ENCODE measurements at regions of chr15 and their contacts with region 1.

Region 1: DNA sequence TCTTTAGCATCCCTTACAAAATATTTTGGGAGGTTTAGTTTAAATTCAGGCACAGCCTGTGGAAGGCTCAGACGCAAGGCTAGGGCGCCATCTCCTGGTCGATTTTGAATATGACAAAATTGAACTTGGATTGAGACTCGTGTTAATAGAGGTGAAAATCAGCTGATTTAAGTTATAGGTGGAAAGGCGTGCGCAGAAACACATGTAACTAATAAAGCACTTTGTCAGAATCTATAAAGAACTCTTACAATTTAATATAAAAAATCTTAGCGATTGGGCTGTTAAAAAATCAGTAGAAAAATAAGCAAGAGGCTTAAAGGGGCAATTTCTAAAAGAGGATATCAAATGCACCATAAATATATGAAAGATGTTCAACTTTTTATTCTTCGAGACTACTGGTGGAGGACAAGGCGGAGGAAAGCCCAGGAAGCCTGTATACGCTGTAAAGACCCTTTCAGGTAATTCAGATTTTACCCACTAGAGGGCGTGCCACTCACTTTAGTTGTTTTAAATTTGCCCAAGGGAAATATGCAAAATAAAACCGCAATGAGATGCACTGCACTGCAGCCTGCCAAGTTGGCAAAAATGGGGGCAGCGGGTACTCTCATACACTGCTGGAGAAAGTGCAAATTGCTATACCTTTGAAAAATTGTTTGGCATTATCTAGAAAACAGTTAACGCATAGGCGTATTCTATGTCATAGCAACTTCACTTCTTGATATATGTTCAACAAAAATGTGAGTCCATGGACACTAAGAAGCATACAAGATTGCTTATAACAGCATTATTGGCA is 64.7 kb downstream of the SLC30A4 start:
- DNase-seq: peak in 4 of 6 donors; percentile 44 to 82 (median 70)
- ATAC-seq: peak; percentile 82 to 88 (median 88)
- H3K4me3 ChIP-seq: peak overlapping the region; percentile 13 to 32 (median 22)
- H3K27ac ChIP-seq: peak overlapping the region; percentile 0 to 79 (median 57)
- H3K4me1 ChIP-seq: peaks cover 0 to 13% (median 0%) of the 10 kb centered on the region in 3 donors
- H3K27me3 ChIP-seq: no peaks in the 10 kb centered on the region
- CTCF ChIP-seq: peak in 3 of 4 donors; percentile 59 to 74 (median 69)

Region 2: DNA sequence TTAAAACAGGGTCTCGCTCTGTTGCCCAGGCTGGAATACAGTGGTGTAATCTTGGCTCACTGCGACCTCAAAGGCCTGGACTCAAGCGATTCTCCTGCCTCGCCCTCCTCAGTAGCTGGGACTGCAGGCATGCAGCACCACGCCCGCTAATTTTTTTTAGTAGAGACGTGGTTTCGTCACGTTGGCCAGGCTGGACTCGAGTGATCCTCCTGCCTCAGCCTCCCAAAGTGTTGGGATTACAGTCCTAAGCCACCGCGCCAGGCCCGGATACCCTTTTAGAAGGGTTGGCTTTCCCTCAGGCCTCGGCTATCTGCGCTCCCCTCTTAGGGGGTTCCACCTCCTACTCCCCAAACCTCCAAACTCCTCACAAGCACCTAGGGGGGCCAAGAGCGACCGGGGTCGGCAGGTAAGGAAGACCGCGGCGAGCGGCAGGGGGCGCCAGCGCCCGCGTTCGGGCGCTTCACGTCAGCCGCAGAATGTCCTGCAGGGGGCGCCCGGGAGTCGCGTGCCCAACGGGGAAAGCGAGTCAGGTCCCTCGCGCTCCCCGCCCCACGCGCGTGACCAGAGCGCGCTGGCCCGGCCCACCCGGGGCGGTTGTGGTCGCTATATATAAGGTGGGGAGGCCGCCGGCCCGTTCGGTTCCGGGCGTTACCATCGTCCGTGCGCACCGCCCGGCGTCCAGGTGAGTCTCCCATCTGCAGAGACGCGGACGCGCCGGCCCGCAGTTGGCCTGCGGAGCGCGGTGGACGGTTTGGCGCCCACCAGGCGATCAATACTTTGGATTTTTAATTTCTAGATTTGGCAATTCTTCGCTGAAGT is 27.7 kb before region 1 on chr15:
- intact Hi-C with region 1: loop called in 1 of 3 experiments (anchors 2 kb)
- DNase-seq: peak; percentile 63 to 99 (median 82)
- ATAC-seq: peak; percentile 92 to 93 (median 93)
- H3K4me3 ChIP-seq: peak overlapping the region; percentile 18 to 58 (median 37)
- H3K27ac ChIP-seq: peak overlapping the region in 2 of 4 donors; percentile 38 to 55
- H3K4me1 ChIP-seq: peaks cover 0 to 10% (median 0%) of the 10 kb centered on the region in 3 donors
- H3K27me3 ChIP-seq: no peaks in the 10 kb centered on the region
- CTCF ChIP-seq: peak; percentile 99 to 100 (median 99)

Region 3: GRCh38 chr15:45611305-45611704 is 153.5 kb after region 1 on chr15:
- intact Hi-C with region 1: loop called in 2 of 3 experiments (anchors 5 to 10 kb)
- DNase-seq: no peak
- ATAC-seq: no peak
- H3K4me3 ChIP-seq: no peak overlapping the region
- H3K27ac ChIP-seq: no peak overlapping the region
- H3K4me1 ChIP-seq: no peaks in the 10 kb centered on the region
- H3K27me3 ChIP-seq: no peaks in the 10 kb centered on the region
- CTCF ChIP-seq: peak in 2 of 4 donors; percentile 13 to 20